Cardiac septum (tissue), 1 donor: ENCODE measurements at regions of chr3 and their contacts with region 1.

Region 1: GRCh38 chr3:170307671-170308403 is 49.7 kb upstream of the SKIL start:
- DNase-seq: no peak

Region 2: DNA sequence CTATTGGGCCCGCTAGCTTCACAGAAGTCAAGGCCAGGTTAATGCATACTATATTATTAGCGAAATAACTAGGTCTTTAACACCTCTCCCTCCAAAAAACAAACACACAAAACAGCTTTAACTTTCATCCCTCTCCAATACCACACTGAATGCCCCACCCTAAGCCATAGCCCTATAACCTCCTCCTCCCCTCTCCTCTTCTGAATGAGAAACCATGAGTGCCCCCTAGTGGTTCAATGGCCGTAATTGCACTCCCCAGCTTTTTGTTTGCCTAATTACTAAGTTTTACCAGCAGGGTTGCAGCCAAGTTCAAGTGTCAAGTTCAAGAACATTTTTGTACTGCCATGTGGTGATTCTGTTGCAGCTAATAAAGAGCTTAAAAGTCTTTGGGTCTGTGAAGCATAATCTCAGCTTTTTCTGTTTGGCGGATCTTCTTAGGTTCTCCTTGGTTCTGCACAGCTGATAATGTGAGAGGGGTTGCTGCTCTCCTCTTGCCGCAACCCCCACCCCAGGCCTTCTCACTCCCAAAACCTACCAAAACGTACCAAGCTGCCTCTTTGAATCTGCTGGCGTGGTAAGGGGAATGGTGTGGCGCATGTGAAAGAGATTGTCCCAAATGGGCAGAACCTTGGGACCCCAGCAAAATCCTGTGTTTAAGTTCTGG is 504.2 kb after region 1 on chr3:
- intact Hi-C with region 1: loop called (anchors 2 kb)
- DNase-seq: no peak